Activated CD8-positive, alpha-beta memory T cell treated with anti-CD3 and anti-CD28 coated beads, Interleukin-2, amount 10 ng/mL, durations not matched to agents 7 days and 5 days (primary cell): ENCODE measurements at regions of chr10 and their contacts with region 1.

Region 1: DNA sequence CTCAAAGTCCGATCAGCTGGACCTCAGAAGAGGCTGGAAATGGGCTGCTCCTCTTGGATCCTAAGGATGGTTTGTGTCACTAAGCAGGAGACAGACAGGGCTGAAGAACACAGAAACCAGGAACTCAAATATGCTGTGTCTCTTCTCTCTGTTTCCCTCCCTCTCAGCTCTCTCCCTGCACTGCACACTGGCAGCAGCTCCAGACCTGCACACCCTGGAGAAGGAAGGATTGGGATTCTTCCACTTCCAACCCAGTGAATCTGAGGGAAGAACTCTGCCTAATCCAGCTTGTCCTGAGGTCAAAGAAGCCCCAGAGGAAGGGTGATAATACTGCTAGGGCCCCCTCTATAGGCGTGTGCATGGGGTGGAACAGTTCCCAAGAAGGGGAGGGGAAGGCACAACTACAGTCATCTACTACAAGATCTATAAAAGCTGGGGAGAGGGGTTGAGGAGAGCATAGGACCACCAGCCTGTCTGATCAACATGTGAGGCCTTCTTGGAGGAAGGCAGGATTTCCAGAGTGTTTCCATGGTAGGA is 22.7 kb upstream of the ZCCHC24 start:
- DNase-seq: no peak
- ATAC-seq: no peak
- H3K4me3 Mint-ChIP-seq: no peak overlapping the region
- H3K27ac Mint-ChIP-seq: no peak overlapping the region
- H3K4me1 Mint-ChIP-seq: no peaks in the 10 kb centered on the region
- H3K27me3 Mint-ChIP-seq: peaks cover 15% of the 10 kb centered on the region

Region 2: DNA sequence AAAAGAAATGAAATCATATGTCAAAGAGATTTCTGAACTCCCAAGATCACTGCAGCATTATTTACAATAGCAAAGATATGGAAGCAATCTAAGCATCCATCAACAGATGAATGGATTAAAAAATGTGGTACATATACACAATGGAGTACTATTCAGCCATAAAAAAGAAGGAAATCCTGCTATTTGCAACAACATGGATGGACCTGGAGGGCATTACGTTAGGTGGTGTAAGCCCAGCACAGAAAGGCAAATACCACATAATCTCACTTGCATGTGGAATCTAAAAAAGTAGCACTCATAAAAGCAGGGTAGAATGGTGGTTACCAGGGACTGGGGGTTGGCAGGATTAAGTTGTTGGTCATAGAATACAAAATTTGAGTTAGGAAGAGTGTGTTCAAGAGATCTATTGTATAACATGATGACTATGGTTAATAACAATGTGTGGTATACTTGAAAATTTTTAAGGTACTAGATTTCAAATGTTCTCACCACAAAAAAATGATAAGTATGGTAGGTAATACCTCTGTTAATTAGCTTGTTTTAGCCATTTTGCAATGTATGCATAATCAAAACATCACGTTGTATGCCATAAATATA is 11.3 kb after region 1 on chr10:
- CTCF ChIA-PET with region 1: interaction called, 10 read pairs
- DNase-seq: no peak
- ATAC-seq: no peak
- H3K4me3 Mint-ChIP-seq: no peak overlapping the region
- H3K27ac Mint-ChIP-seq: no peak overlapping the region
- H3K4me1 Mint-ChIP-seq: peaks cover 3% of the 10 kb centered on the region
- H3K27me3 Mint-ChIP-seq: peaks cover 40% of the 10 kb centered on the region

Region 3: GRCh38 chr10:79487296-79488194 is 19.5 kb after region 1 on chr10:
- CTCF ChIA-PET with region 1: interaction called, 11 read pairs
- DNase-seq: peak; percentile 62
- ATAC-seq: peak; percentile 79
- H3K4me3 Mint-ChIP-seq: no peak overlapping the region
- H3K27ac Mint-ChIP-seq: no peak overlapping the region
- H3K4me1 Mint-ChIP-seq: peaks cover 5% of the 10 kb centered on the region
- H3K27me3 Mint-ChIP-seq: peaks cover 4% of the 10 kb centered on the region